Adrenal gland (tissue), 19 donors: ENCODE measurements at regions of chr7 and their contacts with region 1.

Region 1: DNA sequence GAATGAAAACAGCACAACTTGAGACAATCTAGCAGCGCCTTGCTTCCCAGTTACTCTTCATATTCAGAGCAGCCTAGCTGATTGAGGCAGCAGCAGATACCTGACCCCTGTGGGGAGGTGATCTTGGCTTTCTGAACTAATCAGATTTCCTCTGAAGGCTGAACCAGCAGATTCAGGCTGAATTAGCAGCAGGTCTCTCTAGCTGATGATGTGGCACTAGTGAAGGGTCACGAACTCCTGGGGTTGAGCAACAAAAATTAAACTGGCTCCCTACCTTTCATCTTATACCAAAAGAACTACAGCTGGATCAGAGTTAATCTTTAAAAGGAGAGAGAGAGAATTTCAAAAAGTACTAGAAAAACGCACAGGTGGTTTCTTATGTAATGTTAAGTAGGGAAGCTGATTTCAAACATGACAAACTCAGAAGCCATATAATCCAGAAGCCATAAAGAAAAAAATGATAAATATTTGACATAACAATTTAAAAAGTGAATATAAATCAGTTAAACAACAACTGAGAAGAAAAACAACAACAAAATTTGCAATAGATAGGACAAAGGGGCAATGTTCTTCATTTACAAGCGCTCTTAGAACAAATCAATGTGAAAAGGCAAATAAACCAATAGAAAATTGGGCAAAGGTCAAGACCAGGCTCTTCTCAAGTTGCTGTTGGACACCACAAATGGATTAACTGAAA is 13.5 kb downstream of the SLC25A13 start:
- DNase-seq: no peak
- H3K4me3 ChIP-seq: no peak overlapping the region
- H3K27ac ChIP-seq: no peak overlapping the region
- H3K4me1 ChIP-seq: peaks cover 38 to 55% of the 10 kb centered on the region in 2 donors
- H3K27me3 ChIP-seq: no peaks in the 10 kb centered on the region
- CTCF ChIP-seq: no peak
- POLR2A ChIP-seq: no peak

Region 2: GRCh38 chr7:96224685-96225084 is 83.7 kb before region 1 on chr7:
- intact Hi-C with region 1: loop called in 1 of 2 experiments (anchors 5 kb)
- DNase-seq: no peak
- H3K4me3 ChIP-seq: no peak overlapping the region
- H3K27ac ChIP-seq: no peak overlapping the region
- H3K4me1 ChIP-seq: peaks cover 0 to 12% of the 10 kb centered on the region in 2 donors
- H3K27me3 ChIP-seq: no peaks in the 10 kb centered on the region
- CTCF ChIP-seq: no peak
- POLR2A ChIP-seq: no peak